T-cell (primary cell): ENCODE measurements at regions of chr16 and their contacts with region 1.

Region 1: GRCh38 chr16:964356-965042 is 6.3 kb downstream of the LMF1 start:
- DNase-seq: peak; percentile 37 to 83 (median 66)
- ATAC-seq: peak; percentile 84 to 94 (median 90)
- H3K4me3 ChIP-seq: peak overlapping the region in 1 of 2 donors; percentile 39
- H3K4me3 Mint-ChIP-seq: peak overlapping the region; percentile 74 to 79 (median 79)
- H3K27ac ChIP-seq: peak overlapping the region; percentile 79
- H3K27ac Mint-ChIP-seq: peak overlapping the region; percentile 92
- H3K4me1 ChIP-seq: peaks cover 9 to 38% of the 10 kb centered on the region in 2 experiments
- H3K4me1 Mint-ChIP-seq: peaks cover 40 to 62% (median 61%) of the 10 kb centered on the region in 3 donors
- H3K27me3 ChIP-seq: no peaks in the 10 kb centered on the region
- H3K27me3 Mint-ChIP-seq: no peaks in the 10 kb centered on the region

Region 2: DNA sequence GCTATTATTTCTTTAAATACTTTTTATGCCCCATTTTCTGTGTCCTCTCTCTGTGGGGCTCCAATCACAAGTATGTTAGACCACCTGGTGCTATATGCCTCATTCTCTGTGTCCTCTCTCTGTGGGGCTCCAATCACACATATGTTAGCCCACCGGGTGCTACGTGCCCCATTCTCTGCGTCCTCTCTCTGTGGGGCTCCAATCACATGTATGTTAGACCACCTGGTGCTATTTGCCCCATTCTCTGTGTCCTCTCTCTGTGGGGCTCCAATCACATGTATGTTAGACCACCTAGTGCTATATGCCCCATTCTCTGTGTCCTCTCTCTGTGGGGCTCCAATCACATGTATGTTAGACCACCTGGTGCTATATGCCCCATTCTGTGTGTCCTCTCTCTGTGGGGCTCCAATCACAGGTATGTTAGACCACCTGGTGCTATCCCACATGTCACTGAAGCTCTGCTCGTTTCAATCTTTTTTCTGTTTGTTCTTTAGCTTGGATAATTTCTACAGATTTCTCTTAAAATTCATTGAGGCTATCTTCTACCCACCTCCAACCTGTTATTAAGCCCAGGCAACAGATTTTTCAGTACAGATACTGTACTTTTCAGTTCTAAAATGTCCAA is 22.0 kb before region 1 on chr16:
- CTCF ChIA-PET with region 1: no interaction called
- POLR2A ChIA-PET with region 1: interaction called in 1 of 2 experiments, 10 read pairs
- DNase-seq: no peak
- ATAC-seq: no peak
- H3K4me3 ChIP-seq: no peak overlapping the region
- H3K4me3 Mint-ChIP-seq: no peak overlapping the region
- H3K27ac ChIP-seq: no peak overlapping the region
- H3K27ac Mint-ChIP-seq: no peak overlapping the region
- H3K4me1 ChIP-seq: no peaks in the 10 kb centered on the region
- H3K4me1 Mint-ChIP-seq: peaks cover 0 to 3% (median 0%) of the 10 kb centered on the region in 3 donors
- H3K27me3 ChIP-seq: no peaks in the 10 kb centered on the region
- H3K27me3 Mint-ChIP-seq: no peaks in the 10 kb centered on the region

Region 3: GRCh38 chr16:1300664-1301476 is 336.4 kb after region 1 on chr16:
- CTCF ChIA-PET with region 1: no interaction called
- POLR2A ChIA-PET with region 1: no interaction called
- DNase-seq: peak in 34 of 35 experiments; percentile 30 to 80 (median 60)
- ATAC-seq: peak; percentile 53 to 76 (median 70)
- H3K4me3 ChIP-seq: no peak overlapping the region
- H3K4me3 Mint-ChIP-seq: peak overlapping the region in 1 of 3 donors; percentile 65
- H3K27ac ChIP-seq: no peak overlapping the region
- H3K27ac Mint-ChIP-seq: no peak overlapping the region
- H3K4me1 ChIP-seq: peaks cover 3 to 38% of the 10 kb centered on the region in 2 experiments
- H3K4me1 Mint-ChIP-seq: peaks cover 21 to 39% (median 28%) of the 10 kb centered on the region in 3 donors
- H3K27me3 ChIP-seq: peaks cover 0 to 36% of the 10 kb centered on the region in 2 experiments
- H3K27me3 Mint-ChIP-seq: peaks cover 5 to 19% of the 10 kb centered on the region in 2 donors